ENCODE measurements at regions of chr15 and their contacts with region 1.

Region 1: GRCh38 chr15:74540761-74541493 is at the start of gene ARID3B:
- DNase-seq: peak; percentile 89 to 98 (median 95)
- ATAC-seq: peak; percentile 82
- H3K4me3 ChIP-seq: peak within 1 kb of the TSS; percentile 88
- H3K4me3 Mint-ChIP-seq: peak within 1 kb of the TSS; percentile 99
- H3K27ac ChIP-seq: peak within 1 kb of the TSS; percentile 66 to 81
- H3K27ac Mint-ChIP-seq: peak within 1 kb of the TSS; percentile 98
- H3K4me1 ChIP-seq: peaks cover 39% of the 10 kb centered on the region
- H3K4me1 Mint-ChIP-seq: peaks cover 55% of the 10 kb centered on the region
- H3K27me3 ChIP-seq: no peaks in the 10 kb centered on the region
- H3K27me3 Mint-ChIP-seq: no peaks in the 10 kb centered on the region
- CTCF ChIP-seq: no peak
- total RNA-seq, gene ARID3B: 35.2 to 38.7 TPM

Region 2: GRCh38 chr15:74373731-74374647 is 166.9 kb before region 1 on chr15:
- CTCF ChIA-PET with region 1: interaction called, 4 read pairs
- POLR2A ChIA-PET with region 1: no interaction called
- intact Hi-C with region 1: loop called (anchors 1 to 2 kb)
- DNase-seq: peak; percentile 92 to 97 (median 95)
- ATAC-seq: peak; percentile 96
- H3K4me3 ChIP-seq: peak overlapping the region; percentile 89 to 96
- H3K4me3 Mint-ChIP-seq: peak overlapping the region; percentile 82
- H3K27ac ChIP-seq: peak overlapping the region; percentile 45 to 62
- H3K27ac Mint-ChIP-seq: no peak overlapping the region
- H3K4me1 ChIP-seq: peaks cover 15% of the 10 kb centered on the region
- H3K4me1 Mint-ChIP-seq: peaks cover 16% of the 10 kb centered on the region
- H3K27me3 ChIP-seq: no peaks in the 10 kb centered on the region
- H3K27me3 Mint-ChIP-seq: peaks cover 8% of the 10 kb centered on the region
- CTCF ChIP-seq: peak; percentile 86

Region 3: GRCh38 chr15:74460871-74461846 is 79.8 kb before region 1 on chr15 and contains the start of gene UBL7:
- CTCF ChIA-PET with region 1: no interaction called
- POLR2A ChIA-PET with region 1: interaction called, 8 read pairs
- intact Hi-C with region 1: loop called (anchors 1 kb)
- DNase-seq: peak; percentile 93 to 99 (median 96)
- ATAC-seq: peak; percentile 98
- H3K4me3 ChIP-seq: peak within 1 kb of the TSS; percentile 74 to 85
- H3K4me3 Mint-ChIP-seq: peak within 1 kb of the TSS; percentile 93
- H3K27ac ChIP-seq: peak within 1 kb of the TSS; percentile 53 to 83
- H3K27ac Mint-ChIP-seq: peak within 1 kb of the TSS; percentile 94
- H3K4me1 ChIP-seq: peaks cover 21% of the 10 kb centered on the region
- H3K4me1 Mint-ChIP-seq: peaks cover 50% of the 10 kb centered on the region
- H3K27me3 ChIP-seq: no peaks in the 10 kb centered on the region
- H3K27me3 Mint-ChIP-seq: no peaks in the 10 kb centered on the region
- CTCF ChIP-seq: no peak
- total RNA-seq, gene UBL7: 21.7 to 23.1 TPM

Region 4: GRCh38 chr15:74511583-74511982 is 29.3 kb before region 1 on chr15:
- CTCF ChIA-PET with region 1: no interaction called
- POLR2A ChIA-PET with region 1: no interaction called
- intact Hi-C with region 1: no loop called
- DNase-seq: no peak
- ATAC-seq: no peak
- H3K4me3 ChIP-seq: no peak overlapping the region
- H3K4me3 Mint-ChIP-seq: no peak overlapping the region
- H3K27ac ChIP-seq: no peak overlapping the region
- H3K27ac Mint-ChIP-seq: no peak overlapping the region
- H3K4me1 ChIP-seq: no peaks in the 10 kb centered on the region
- H3K4me1 Mint-ChIP-seq: peaks cover 6% of the 10 kb centered on the region
- H3K27me3 ChIP-seq: no peaks in the 10 kb centered on the region
- H3K27me3 Mint-ChIP-seq: no peaks in the 10 kb centered on the region
- CTCF ChIP-seq: no peak

Region 5: GRCh38 chr15:74598126-74598842 is 57.4 kb after region 1 on chr15:
- CTCF ChIA-PET with region 1: interaction called, 3 read pairs
- POLR2A ChIA-PET with region 1: interaction called, 11 read pairs
- intact Hi-C with region 1: loop called in 1 of 2 experiments (anchors 2 kb)
- DNase-seq: peak; percentile 71 to 91 (median 87)
- ATAC-seq: peak; percentile 98
- H3K4me3 ChIP-seq: peak overlapping the region; percentile 86 to 87
- H3K4me3 Mint-ChIP-seq: peak overlapping the region; percentile 99
- H3K27ac ChIP-seq: peak overlapping the region; percentile 75 to 78
- H3K27ac Mint-ChIP-seq: peak overlapping the region; percentile 97
- H3K4me1 ChIP-seq: peaks cover 11% of the 10 kb centered on the region
- H3K4me1 Mint-ChIP-seq: peaks cover 23% of the 10 kb centered on the region
- H3K27me3 ChIP-seq: no peaks in the 10 kb centered on the region
- H3K27me3 Mint-ChIP-seq: no peaks in the 10 kb centered on the region
- CTCF ChIP-seq: no peak

Region 6: DNA sequence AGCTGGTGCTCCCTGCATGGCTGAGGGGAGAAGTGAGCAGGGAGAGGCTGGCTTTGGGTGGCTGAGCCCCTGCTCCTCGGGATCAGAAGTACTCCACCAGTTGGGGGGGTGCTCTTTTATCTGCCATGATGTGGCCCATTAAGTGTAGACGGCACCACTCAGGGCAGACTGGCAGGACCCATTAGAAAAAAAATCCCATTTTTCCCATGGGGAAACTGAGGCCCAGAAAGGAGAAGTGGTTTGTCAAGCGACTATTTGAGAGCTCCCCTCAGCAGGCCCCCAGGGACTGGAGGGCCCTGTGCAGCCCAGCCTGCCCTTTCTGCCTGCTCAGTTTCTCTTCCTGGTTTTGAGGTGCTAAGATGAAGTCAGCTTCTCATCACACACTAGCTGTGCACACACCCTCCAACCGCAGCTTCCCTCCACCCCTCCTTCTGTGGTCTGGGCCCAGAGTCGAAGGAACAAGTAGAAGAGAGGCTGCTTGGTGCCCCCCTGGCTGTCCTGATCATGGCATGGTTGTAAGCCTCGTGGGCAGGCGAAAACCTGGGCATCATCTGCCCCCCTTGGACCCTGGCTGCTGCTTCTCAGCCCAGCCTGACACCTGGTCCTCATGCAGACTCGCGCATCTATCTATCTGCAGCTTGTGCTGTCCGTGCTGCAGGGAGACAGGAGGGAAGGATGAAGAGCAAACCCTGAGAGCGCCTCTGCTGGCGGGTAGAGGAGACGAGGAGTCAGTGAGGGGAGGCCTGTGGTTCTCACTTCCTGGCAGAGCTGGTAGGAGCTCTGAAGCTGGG is 246.5 kb after region 1 on chr15:
- CTCF ChIA-PET with region 1: no interaction called
- POLR2A ChIA-PET with region 1: no interaction called
- intact Hi-C with region 1: loop called (anchors 5 kb)
- DNase-seq: peak; percentile 81 to 97 (median 92)
- ATAC-seq: peak; percentile 71
- H3K4me3 ChIP-seq: peak overlapping the region; percentile 83 to 98
- H3K4me3 Mint-ChIP-seq: peak overlapping the region; percentile 83
- H3K27ac ChIP-seq: peak overlapping the region; percentile 53 to 90
- H3K27ac Mint-ChIP-seq: peak overlapping the region; percentile 92
- H3K4me1 ChIP-seq: peaks cover 76% of the 10 kb centered on the region
- H3K4me1 Mint-ChIP-seq: peaks cover 71% of the 10 kb centered on the region
- H3K27me3 ChIP-seq: no peaks in the 10 kb centered on the region
- H3K27me3 Mint-ChIP-seq: no peaks in the 10 kb centered on the region
- CTCF ChIP-seq: peak; percentile 62

Region 7: GRCh38 chr15:74950078-74951000 is 409.4 kb after region 1 on chr15:
- CTCF ChIA-PET with region 1: no interaction called
- POLR2A ChIA-PET with region 1: no interaction called
- intact Hi-C with region 1: loop called in 1 of 2 experiments (anchors 5 kb)
- DNase-seq: peak; percentile 65 to 84 (median 79)
- ATAC-seq: peak; percentile 99
- H3K4me3 ChIP-seq: no peak overlapping the region
- H3K4me3 Mint-ChIP-seq: no peak overlapping the region
- H3K27ac ChIP-seq: no peak overlapping the region
- H3K27ac Mint-ChIP-seq: no peak overlapping the region
- H3K4me1 ChIP-seq: no peaks in the 10 kb centered on the region
- H3K4me1 Mint-ChIP-seq: peaks cover 6% of the 10 kb centered on the region
- H3K27me3 ChIP-seq: peaks cover 0 to 2% of the 10 kb centered on the region in 2 experiments
- H3K27me3 Mint-ChIP-seq: no peaks in the 10 kb centered on the region
- CTCF ChIP-seq: peak; percentile 94

Region 8: GRCh38 chr15:75620841-75621391 is 1080.0 kb after region 1 on chr15:
- CTCF ChIA-PET with region 1: no interaction called
- POLR2A ChIA-PET with region 1: no interaction called
- intact Hi-C with region 1: no loop called
- DNase-seq: no peak
- ATAC-seq: no peak
- H3K4me3 ChIP-seq: no peak overlapping the region
- H3K4me3 Mint-ChIP-seq: no peak overlapping the region
- H3K27ac ChIP-seq: peak overlapping the region in 1 of 2 experiments; percentile 43
- H3K27ac Mint-ChIP-seq: peak overlapping the region; percentile 74
- H3K4me1 ChIP-seq: peaks cover 15% of the 10 kb centered on the region
- H3K4me1 Mint-ChIP-seq: peaks cover 33% of the 10 kb centered on the region
- H3K27me3 ChIP-seq: no peaks in the 10 kb centered on the region
- H3K27me3 Mint-ChIP-seq: no peaks in the 10 kb centered on the region
- CTCF ChIP-seq: no peak

Region 9: GRCh38 chr15:75842722-75843551 is 1302.0 kb after region 1 on chr15 and contains the start of gene UBE2Q2:
- CTCF ChIA-PET with region 1: no interaction called
- POLR2A ChIA-PET with region 1: interaction called, 3 read pairs
- intact Hi-C with region 1: loop called in 1 of 2 experiments (anchors 2 kb)
- DNase-seq: peak; percentile 13 to 86 (median 75)
- ATAC-seq: peak; percentile 62
- H3K4me3 ChIP-seq: peak within 1 kb of the TSS; percentile 72 to 73
- H3K4me3 Mint-ChIP-seq: peak within 1 kb of the TSS; percentile 90
- H3K27ac ChIP-seq: peak within 1 kb of the TSS; percentile 58 to 59
- H3K27ac Mint-ChIP-seq: peak within 1 kb of the TSS; percentile 93
- H3K4me1 ChIP-seq: peaks cover 26% of the 10 kb centered on the region
- H3K4me1 Mint-ChIP-seq: peaks cover 45% of the 10 kb centered on the region
- H3K27me3 ChIP-seq: no peaks in the 10 kb centered on the region
- H3K27me3 Mint-ChIP-seq: no peaks in the 10 kb centered on the region
- CTCF ChIP-seq: no peak
- total RNA-seq, gene UBE2Q2: 28.5 to 30.4 TPM

Measured in CD8-positive, alpha-beta T cell (primary cell).